Endothelial cell of umbilical vein (primary cell): ENCODE measurements at regions of chr1 and their contacts with region 1.

Region 1: DNA sequence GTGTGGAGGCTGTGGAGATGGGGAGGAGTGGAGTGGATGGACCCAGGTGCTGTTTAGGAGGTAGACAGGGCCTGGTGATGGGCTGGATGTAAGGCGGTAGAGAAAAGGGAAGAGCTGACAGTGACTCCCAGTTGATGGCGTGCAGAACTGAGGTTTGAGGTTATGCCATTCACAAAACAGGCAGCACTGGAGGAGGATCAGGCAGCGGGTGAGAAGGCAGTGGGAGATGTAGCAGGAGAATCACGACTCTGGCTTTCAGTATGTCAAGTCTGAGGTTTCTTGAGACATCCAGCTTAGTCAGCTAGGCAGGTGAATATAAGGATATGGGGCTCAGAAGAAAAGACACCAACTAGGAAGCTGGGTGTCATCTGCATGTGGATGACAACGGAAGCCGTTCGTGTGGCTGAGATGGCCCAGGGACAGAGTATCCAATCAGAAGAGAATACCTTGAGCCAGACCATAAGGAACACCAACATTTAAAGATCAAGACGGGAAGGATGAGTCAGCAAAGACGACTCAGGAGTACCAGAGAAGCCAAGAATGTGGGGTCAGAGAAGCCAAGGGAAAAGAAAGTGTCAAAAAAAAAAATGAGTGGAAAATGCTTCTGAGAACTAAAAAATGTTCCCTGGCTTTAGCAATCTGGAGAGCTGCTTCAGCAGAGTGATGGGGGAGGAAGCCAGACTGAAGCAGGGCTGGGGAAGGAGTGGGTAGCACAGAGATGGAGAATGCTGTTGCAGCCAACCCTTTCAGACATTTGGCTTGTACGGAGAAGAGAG is 15.2 kb downstream of the LRRN2 start:
- DNase-seq: no peak
- H3K4me3 ChIP-seq: no peak overlapping the region
- H3K27ac ChIP-seq: no peak overlapping the region
- H3K4me1 ChIP-seq: no peaks in the 10 kb centered on the region
- H3K27me3 ChIP-seq: peaks cover 2 to 3% of the 10 kb centered on the region in 2 experiments
- CTCF ChIP-seq: no peak
- POLR2A ChIP-seq: no peak

Region 2: DNA sequence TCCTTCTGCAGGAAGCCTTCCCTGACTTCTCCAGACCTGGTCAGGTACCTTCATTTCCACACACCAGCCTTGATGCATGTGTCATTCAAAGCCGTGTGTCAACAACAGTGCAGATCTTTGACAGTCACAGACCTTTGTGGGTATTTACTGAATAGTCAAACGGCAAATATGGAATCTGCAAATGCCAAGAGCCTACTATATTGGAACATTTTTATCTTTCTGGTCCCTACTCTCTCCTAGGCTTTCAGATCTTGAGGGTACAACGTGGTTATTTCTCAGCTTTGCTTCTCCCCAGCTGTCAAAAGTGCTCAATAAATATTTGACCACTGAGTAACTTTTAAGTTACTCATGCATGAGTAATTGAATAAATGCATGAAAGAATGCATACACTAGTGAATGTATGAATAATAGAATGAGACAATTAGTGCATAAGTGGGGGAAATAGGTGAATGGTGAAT is 78.7 kb before region 1 on chr1:
- CTCF ChIA-PET with region 1: no interaction called
- POLR2A ChIA-PET with region 1: interaction called, 10 read pairs
- dilution Hi-C with region 1: no loop called
- intact Hi-C with region 1: no loop called
- DNase-seq: peak; percentile 24
- H3K4me3 ChIP-seq: no peak overlapping the region
- H3K27ac ChIP-seq: no peak overlapping the region
- H3K4me1 ChIP-seq: peaks cover 11% of the 10 kb centered on the region
- H3K27me3 ChIP-seq: no peaks in the 10 kb centered on the region
- CTCF ChIP-seq: no peak
- POLR2A ChIP-seq: no peak

Region 3: DNA sequence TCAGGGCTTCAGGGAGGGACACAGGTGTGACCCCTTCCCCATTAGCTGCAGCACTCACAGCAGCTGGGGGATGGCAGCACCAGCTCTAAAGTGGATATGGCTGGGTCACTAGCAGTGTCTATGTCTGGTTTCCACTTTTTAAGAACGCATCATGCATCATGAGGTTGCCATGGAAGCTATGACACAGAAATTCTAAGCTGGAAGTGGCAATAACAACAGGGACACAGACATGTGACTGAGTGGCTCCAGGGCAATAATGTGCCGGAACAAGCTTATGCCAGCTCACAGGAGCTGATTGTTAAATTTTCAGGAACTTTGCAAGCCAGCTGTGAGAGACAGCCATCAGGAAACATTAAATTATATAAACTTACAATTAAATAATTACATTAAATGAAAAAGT is 149.2 kb after region 1 on chr1:
- CTCF ChIA-PET with region 1: no interaction called
- POLR2A ChIA-PET with region 1: no interaction called
- dilution Hi-C with region 1: no loop called
- intact Hi-C with region 1: no loop called
- DNase-seq: no peak
- H3K4me3 ChIP-seq: no peak overlapping the region
- H3K27ac ChIP-seq: no peak overlapping the region
- H3K4me1 ChIP-seq: no peaks in the 10 kb centered on the region
- H3K27me3 ChIP-seq: peaks cover 2 to 3% of the 10 kb centered on the region in 2 experiments
- CTCF ChIP-seq: no peak
- POLR2A ChIP-seq: no peak